ENCODE measurements at regions of chr2 and their contacts with region 1.

Region 1: DNA sequence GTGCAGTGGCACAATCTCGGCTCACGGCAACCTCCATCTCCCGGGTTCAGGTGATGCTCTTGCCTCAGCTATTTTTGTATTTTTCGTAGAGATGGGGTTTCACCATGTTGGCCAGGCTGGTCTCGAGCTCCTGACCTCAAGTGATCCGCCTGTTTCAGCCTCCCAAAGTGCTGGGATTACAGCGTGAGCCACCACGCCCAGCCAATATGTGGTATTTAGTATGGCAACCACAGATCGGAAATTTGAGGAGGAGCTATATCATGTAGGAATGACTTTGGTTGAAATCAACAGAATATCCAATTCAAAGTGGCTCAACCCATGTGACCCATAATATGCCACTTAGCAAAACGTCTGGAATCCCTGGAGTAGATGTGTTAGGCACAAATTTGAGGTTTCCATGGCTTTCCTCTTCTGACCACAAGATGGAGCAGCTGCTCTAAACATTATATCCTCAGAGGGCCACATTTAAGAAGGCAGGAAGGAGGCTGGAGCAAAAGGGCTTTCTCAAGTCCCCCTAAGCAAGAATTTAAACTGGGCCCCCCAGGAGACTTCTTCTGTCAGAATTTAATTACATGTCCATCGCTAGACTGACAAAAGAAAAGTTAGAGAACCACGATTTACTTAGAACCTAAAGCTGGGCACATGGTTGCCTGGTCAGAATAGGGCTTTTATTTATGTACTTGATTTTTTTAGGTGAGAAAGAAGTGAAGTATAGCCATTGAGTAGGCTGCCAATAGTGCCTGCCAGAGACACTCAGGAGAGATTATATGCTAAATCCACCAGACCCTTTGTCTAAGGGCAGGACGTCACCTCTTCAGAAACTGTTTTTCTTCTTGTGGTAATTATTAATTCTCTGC is 49.6 kb upstream of the ITSN2 start:
- DNase-seq: peak; percentile 81 to 83
- ATAC-seq: peak; percentile 96 to 97
- H3K4me3 ChIP-seq: no peak overlapping the region
- H3K27ac ChIP-seq: no peak overlapping the region
- H3K4me1 ChIP-seq: peaks cover 10% of the 10 kb centered on the region; the same call in 1 of the 3 replicates
- CTCF ChIP-seq: peak; percentile 98
- EP300 ChIP-seq: no peak
- POLR2A ChIP-seq: no peak
- RAD21 ChIP-seq: peak; percentile 97

Region 2: DNA sequence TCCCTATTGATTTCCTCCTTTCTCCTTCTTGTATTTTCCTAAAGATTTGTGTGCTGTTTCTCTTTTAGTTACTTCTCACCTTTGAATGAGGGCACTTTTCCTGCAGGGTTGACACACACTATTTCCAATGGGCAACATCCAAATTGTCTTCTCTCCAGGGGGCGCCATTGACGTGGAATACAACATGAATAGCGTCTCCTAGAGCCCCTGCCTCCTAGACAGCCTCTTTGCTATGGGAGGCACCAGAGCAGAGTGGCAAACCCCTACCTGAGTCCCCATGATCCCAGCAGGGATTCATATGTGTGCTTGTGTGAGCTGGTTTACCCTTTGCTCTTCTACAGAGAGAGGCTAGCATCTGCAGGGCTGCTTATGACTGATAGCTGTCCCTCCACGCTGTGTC is 11.7 kb after region 1 on chr2:
- CTCF ChIA-PET with region 1: interaction called, 37 read pairs
- POLR2A ChIA-PET with region 1: no interaction called
- DNase-seq: peak; percentile 43 to 66
- ATAC-seq: peak; percentile 57 to 90
- H3K4me3 ChIP-seq: no peak overlapping the region
- H3K27ac ChIP-seq: no peak overlapping the region
- H3K4me1 ChIP-seq: no peaks in the 10 kb centered on the region
- CTCF ChIP-seq: peak; percentile 46; the same call in 2 of the 3 replicates
- EP300 ChIP-seq: no peak
- POLR2A ChIP-seq: no peak
- RAD21 ChIP-seq: peak; percentile 61 to 76

Region 3: DNA sequence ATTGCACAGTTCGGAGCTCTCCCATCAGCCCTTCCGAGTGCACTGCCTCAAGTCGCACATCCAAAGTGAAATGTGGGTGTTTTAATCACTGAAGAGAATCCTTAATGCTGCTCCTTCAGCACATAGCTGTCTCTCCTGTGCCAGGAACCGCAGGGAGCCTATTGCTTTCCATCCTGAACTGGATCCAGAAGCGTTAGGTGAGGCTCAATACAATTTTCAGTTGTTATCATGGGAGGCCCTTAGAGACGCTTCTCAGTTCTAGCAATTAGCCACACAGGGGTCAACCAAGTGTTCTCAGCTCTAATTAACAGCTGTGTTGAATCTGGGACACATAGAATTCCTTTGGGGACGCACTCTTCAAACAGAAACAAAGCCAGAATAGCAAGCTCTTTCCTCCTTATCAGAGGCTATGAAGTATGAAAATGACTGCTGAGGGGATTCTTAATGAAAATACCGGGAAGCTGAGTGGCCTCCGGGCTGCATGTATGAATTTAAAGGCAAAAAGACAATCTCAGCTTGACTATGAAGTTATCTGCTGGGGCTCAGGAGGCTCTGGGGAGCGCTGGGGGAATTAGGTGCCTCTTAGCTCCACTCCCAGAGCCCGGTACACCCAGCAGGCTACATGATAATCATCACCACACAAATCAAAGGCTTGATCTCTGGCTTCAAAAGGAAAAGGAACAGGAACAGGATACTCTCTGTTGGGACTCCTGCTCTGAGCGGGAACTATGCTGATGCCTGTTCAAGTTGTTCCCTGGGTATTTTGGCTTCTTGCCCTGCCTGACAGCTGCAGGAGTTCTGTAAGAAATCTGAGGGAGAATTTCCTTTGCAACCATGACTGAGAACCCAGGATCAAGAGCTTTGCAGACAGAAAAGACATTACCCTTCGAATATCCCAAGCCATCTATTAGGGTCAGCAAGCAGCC is 25.7 kb after region 1 on chr2:
- CTCF ChIA-PET with region 1: interaction called, 14 read pairs
- POLR2A ChIA-PET with region 1: no interaction called
- DNase-seq: no peak
- ATAC-seq: peak in 1 of 2 experiments; percentile 30; a peak in 1 of 6 replicates
- H3K4me3 ChIP-seq: no peak overlapping the region
- H3K27ac ChIP-seq: no peak overlapping the region
- H3K4me1 ChIP-seq: no peaks in the 10 kb centered on the region
- CTCF ChIP-seq: no peak
- EP300 ChIP-seq: no peak
- POLR2A ChIP-seq: no peak
- RAD21 ChIP-seq: no peak

Region 4: GRCh38 chr2:24711865-24712264 is 301.9 kb after region 1 on chr2:
- CTCF ChIA-PET with region 1: no interaction called
- POLR2A ChIA-PET with region 1: no interaction called
- DNase-seq: no peak
- ATAC-seq: no peak
- H3K4me3 ChIP-seq: no peak overlapping the region
- H3K27ac ChIP-seq: no peak overlapping the region
- H3K4me1 ChIP-seq: peaks cover 12% of the 10 kb centered on the region; the same call in 2 of the 3 replicates
- CTCF ChIP-seq: no peak
- EP300 ChIP-seq: no peak
- POLR2A ChIP-seq: no peak
- RAD21 ChIP-seq: no peak

Region 5: DNA sequence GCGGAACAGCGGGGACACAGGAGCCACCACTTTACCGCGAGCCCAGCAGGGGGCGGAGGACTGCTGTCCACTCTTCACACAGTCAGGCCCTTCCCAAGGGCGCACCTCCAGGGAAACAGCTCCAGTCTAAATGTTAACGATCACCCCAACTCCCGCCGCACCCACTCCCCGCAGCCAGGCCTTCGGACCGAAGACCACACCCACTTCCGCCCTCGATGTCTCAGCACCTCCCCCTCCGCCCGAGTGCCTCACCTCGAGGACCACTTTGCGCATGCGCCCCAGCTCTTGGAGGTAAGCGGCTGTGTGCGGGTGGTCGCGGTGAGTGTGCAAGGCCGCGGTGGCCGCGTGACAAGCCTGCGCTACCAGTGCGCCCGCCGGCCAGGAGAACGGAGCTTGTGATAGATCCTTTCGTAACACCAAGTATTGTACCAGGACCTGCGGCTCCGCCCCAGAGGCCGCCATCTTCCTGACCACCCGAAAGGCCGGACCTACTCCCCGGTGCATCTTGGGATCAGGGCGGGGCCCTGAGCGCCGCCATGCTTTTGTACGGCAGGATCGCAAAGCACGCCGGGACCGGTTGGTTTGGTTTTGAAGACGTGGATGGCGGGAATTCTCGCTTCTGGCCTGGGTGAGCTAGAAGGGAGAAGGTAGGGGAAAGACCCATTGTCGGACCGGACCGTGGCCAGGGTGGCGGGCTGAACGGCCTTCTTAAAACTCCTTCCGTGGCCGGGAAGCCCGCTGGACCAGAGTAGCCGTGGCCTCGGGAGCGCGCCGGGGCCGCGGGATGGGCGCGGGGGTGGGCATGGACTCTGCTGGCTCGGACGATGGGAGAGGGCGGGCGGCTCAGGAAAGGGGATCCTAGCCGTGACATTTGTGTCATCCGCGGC is 383.2 kb after region 1 on chr2 and contains the starts of genes CENPO and PTRHD1:
- CTCF ChIA-PET with region 1: interaction called, 36 read pairs
- POLR2A ChIA-PET with region 1: no interaction called
- DNase-seq: peak; percentile 96 to 99
- ATAC-seq: peak; percentile 91 to 95
- H3K4me3 ChIP-seq: peak within 1 kb of the TSS; percentile 73
- H3K27ac ChIP-seq: peak within 1 kb of the TSS; percentile 93 to 99
- H3K4me1 ChIP-seq: peaks cover 25% of the 10 kb centered on the region
- CTCF ChIP-seq: peak; percentile 68
- EP300 ChIP-seq: no peak
- POLR2A ChIP-seq: peak; percentile 90
- RAD21 ChIP-seq: peak; percentile 56 to 72
- polyA plus RNA-seq, gene CENPO: 52.4 and 62.0 TPM in 2 replicates
- polyA plus RNA-seq, gene PTRHD1: 86.6 and 141 TPM in 2 replicates

Region 6: GRCh38 chr2:24833821-24834732 is 424.1 kb after region 1 on chr2:
- CTCF ChIA-PET with region 1: interaction called, 252 read pairs
- POLR2A ChIA-PET with region 1: no interaction called
- DNase-seq: no peak
- ATAC-seq: no peak
- H3K4me3 ChIP-seq: no peak overlapping the region
- H3K27ac ChIP-seq: no peak overlapping the region
- H3K4me1 ChIP-seq: no peaks in the 10 kb centered on the region
- CTCF ChIP-seq: no peak
- EP300 ChIP-seq: no peak
- POLR2A ChIP-seq: no peak
- RAD21 ChIP-seq: no peak